Activated CD4-positive, alpha-beta T cell treated with anti-CD3 and anti-CD28 coated beads for 36 hours (primary cell): ENCODE measurements at regions of chr15 and their contacts with region 1.

Region 1: GRCh38 chr15:23467110-23467600 is 20.1 kb upstream of the GOLGA6L2 start:
- DNase-seq: no peak
- ATAC-seq: no peak
- H3K4me3 Mint-ChIP-seq: no peak overlapping the region
- H3K27ac Mint-ChIP-seq: no peak overlapping the region
- H3K4me1 Mint-ChIP-seq: no peaks in the 10 kb centered on the region
- H3K27me3 Mint-ChIP-seq: peaks cover 6% of the 10 kb centered on the region

Region 2: GRCh38 chr15:23516866-23517265 is 49.7 kb after region 1 on chr15:
- CTCF ChIA-PET with region 1: no interaction called
- POLR2A ChIA-PET with region 1: no interaction called
- intact Hi-C with region 1: loop called in 1 of 2 experiments (anchors 10 kb)
- DNase-seq: no peak
- ATAC-seq: no peak
- H3K4me3 Mint-ChIP-seq: no peak overlapping the region
- H3K27ac Mint-ChIP-seq: no peak overlapping the region
- H3K4me1 Mint-ChIP-seq: no peaks in the 10 kb centered on the region
- H3K27me3 Mint-ChIP-seq: peaks cover 2% of the 10 kb centered on the region